Heart left ventricle (tissue), 16 donors: ENCODE measurements at regions of chr1 and their contacts with region 1.

Region 1: DNA sequence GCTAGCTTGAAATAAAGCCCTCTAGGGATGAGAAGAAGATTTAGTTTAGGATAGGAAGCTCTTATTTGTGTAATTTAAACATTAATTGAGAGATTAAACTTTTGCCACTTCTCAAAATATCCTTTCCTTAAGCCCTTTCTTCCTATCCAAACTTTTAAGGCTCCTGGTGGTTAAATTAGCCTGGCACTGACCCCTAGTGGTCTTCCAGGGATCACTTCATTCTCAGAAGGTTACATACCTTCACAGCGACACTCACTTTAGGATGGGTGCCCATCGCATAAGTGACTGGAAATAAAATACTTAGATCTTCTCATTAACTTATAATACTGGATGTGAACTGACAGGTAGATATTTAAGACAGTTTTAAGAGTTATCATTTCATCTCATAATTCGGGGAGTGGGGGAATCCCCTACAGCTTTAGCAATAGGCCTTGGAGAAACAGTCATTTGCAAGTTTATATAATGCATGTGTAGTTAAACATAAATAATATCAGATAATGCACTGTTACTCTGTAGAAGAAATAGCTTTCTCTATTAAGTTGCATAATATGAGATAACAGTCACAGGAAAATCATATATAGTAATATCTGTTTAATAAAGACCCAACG is 7.4 kb downstream of the LHX9 start:
- DNase-seq: no peak
- ATAC-seq: peak in 3 of 4 donors; percentile 61 to 73 (median 66)
- H3K4me3 ChIP-seq: no peak overlapping the region
- H3K27ac ChIP-seq: no peak overlapping the region
- H3K4me1 ChIP-seq: peaks cover 0 to 8% (median under 1%) of the 10 kb centered on the region in 12 donors
- H3K27me3 ChIP-seq: peaks cover 17 to 84% (median 47%) of the 10 kb centered on the region in 9 donors
- CTCF ChIP-seq: peak; percentile 52 to 77 (median 66)
- POLR2A ChIP-seq: no peak

Region 2: DNA sequence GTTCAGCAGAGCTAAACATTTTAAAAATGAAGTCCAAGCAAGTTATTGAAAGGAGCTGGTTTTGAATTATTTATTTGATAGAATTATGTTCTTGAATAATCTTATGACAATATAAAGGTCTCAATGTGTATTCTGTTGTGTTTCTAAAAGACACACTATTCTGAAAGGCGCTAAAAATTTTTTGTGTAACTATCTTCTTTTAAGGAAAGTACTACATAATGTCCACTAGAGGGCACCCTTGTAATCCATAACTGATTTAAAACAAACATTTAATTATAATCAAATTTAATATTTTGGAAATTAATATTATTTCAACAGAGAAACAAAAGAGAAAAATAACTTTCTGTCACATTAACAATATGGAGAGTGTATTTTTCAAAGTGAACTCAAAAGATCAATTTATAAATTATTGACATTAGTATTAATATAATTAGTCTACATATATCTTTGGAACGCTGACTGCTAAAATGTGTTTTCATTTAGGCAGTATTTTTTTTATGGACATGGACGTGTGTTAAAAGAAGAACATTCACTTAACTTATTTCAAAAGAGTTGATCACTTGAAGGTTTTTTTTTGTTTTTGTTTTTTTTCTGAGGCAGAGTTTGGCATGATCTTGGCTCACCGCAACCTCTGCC is 397.8 kb before region 1 on chr1:
- intact Hi-C with region 1: loop called in 9 of 10 experiments (anchors 5 to 10 kb)
- DNase-seq: no peak
- ATAC-seq: no peak
- H3K4me3 ChIP-seq: no peak overlapping the region
- H3K27ac ChIP-seq: no peak overlapping the region
- H3K4me1 ChIP-seq: no peaks in the 10 kb centered on the region
- H3K27me3 ChIP-seq: no peaks in the 10 kb centered on the region
- CTCF ChIP-seq: peak; percentile 61 to 88 (median 78)
- POLR2A ChIP-seq: no peak

Region 3: DNA sequence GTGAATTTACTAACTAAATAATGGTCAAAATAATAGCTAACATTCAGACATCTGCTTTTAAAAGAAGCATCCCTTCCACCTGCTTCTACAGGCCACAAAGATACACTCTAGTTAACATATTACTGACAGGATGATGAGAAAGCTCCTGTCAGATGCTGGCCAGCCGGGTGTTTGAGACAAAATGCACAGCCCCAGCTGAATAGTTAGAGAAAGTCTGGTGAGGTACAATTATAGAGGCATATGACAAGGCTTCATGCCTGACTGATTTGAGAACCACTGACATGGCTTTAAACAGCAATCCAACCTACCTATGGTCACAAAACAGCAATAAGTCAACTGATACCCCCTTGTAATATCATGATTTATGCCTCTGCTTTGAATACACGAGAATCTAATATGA is 286.3 kb before region 1 on chr1:
- intact Hi-C with region 1: no loop called
- DNase-seq: no peak
- ATAC-seq: peak in 3 of 4 donors; percentile 71 to 84 (median 75)
- H3K4me3 ChIP-seq: no peak overlapping the region
- H3K27ac ChIP-seq: peak overlapping the region in 8 of 12 donors; percentile 6 to 61 (median 44)
- H3K4me1 ChIP-seq: peaks cover 0 to 16% (median 5%) of the 10 kb centered on the region in 12 donors
- H3K27me3 ChIP-seq: no peaks in the 10 kb centered on the region
- CTCF ChIP-seq: no peak
- POLR2A ChIP-seq: no peak

Region 4: GRCh38 chr1:197680311-197680710 is 244.3 kb before region 1 on chr1:
- intact Hi-C with region 1: no loop called
- DNase-seq: no peak
- ATAC-seq: no peak
- H3K4me3 ChIP-seq: no peak overlapping the region
- H3K27ac ChIP-seq: no peak overlapping the region
- H3K4me1 ChIP-seq: peaks cover 0 to 31% (median 6%) of the 10 kb centered on the region in 12 donors
- H3K27me3 ChIP-seq: no peaks in the 10 kb centered on the region
- CTCF ChIP-seq: no peak
- POLR2A ChIP-seq: no peak

Region 5: DNA sequence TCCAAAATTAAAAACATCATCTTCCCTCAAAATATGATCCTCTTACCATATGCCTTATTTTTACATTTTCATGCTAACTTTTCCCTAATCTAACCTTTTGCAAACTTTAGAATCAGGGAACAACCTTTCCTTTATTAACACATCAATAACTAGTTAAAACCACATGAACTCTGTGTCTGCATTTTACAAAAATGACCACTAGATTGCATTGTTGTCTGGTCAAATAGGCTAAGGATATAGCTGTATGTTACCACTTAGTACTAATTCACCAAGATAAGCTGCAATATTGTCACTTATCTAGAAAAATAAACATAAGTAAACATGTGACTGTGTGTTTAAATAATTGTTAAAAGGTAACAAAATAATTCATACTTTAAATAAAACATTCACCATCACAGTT is 231.7 kb before region 1 on chr1:
- intact Hi-C with region 1: loop called in 1 of 10 experiments (anchors 10 kb)
- DNase-seq: no peak
- ATAC-seq: no peak
- H3K4me3 ChIP-seq: no peak overlapping the region
- H3K27ac ChIP-seq: no peak overlapping the region
- H3K4me1 ChIP-seq: peaks cover 0 to 23% (median 4%) of the 10 kb centered on the region in 12 donors
- H3K27me3 ChIP-seq: no peaks in the 10 kb centered on the region
- CTCF ChIP-seq: peak in 6 of 12 donors; percentile 16 to 39 (median 24)
- POLR2A ChIP-seq: no peak